ENCODE measurements at regions of chr9 and their contacts with region 1.

Region 1: DNA sequence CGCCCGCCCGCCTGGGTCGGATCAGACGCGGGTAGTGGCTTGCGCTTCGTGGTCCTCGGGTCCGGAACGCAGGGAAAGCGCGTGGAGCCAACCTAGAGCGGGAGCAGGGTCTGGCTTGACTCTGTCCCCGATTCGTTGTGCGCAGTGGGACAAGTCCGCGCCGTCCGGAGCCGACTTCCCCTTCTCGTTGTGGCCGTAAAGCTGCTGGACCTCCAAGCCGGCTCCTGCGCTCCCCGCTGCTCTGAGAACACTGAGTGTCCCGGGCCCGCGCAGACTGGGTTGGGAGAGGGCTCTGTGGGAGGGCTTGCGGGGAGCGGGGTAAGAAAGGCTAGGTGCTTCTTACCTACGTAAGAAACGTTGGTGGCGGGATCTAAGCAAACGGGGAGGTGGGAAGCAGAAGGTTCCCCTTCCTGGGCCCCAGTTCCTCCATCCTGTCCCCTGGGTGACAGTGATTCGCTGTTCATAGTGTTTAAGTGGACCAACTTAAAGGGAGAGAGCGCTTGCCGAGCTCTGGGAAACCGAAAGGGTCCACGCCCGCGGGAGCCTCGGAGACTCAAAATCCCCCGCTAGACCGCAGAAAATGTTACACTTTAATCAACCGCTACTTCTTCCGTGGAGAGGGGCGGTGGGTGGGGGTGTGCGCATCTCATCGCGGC is 4.3 kb upstream of the FOXE1 start:
- DNase-seq: no peak
- H3K4me3 ChIP-seq: no peak overlapping the region
- H3K27ac ChIP-seq: no peak overlapping the region
- H3K4me1 ChIP-seq: peaks cover 7% of the 10 kb centered on the region
- H3K27me3 ChIP-seq: peaks cover 97% of the 10 kb centered on the region
- CTCF ChIP-seq: no peak

Region 2: DNA sequence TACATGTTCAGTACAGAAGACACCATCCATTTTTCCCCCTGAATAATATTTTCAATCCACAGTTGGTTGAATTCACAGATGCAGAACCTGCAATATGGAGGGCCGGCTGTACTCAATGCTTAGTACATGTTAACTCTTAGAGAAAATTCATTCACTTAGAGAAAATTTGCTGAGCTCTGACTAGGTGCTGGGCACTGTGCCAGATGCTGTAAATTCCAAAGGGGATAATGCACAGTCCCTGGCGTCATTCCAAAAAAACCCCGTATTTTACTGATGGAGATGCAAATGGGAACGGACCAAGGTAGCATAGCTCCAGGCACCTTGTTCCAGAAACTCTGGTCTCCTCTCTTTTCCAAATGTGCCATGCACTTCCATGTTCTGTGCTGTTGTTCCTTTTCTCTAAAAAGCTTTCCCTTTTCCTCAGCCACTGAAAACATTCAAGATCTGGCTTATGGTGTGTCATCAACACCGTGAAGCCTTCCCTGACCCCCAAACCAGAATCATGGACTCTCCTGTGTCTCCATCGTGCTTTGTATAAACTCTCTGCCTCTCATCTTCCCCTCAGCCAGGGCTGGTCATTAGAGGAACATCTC is 1039.3 kb after region 1 on chr9:
- CTCF ChIA-PET with region 1: no interaction called
- POLR2A ChIA-PET with region 1: interaction called, 11 read pairs
- intact Hi-C with region 1: no loop called
- DNase-seq: peak; percentile 75
- H3K4me3 ChIP-seq: no peak overlapping the region
- H3K27ac ChIP-seq: no peak overlapping the region
- H3K4me1 ChIP-seq: no peaks in the 10 kb centered on the region
- H3K27me3 ChIP-seq: peaks cover 5% of the 10 kb centered on the region
- CTCF ChIP-seq: no peak

Measured in A673 (cell line).